Heart left ventricle (tissue), 16 donors: ENCODE measurements at regions of chr6 and their contacts with region 1.

Region 1: DNA sequence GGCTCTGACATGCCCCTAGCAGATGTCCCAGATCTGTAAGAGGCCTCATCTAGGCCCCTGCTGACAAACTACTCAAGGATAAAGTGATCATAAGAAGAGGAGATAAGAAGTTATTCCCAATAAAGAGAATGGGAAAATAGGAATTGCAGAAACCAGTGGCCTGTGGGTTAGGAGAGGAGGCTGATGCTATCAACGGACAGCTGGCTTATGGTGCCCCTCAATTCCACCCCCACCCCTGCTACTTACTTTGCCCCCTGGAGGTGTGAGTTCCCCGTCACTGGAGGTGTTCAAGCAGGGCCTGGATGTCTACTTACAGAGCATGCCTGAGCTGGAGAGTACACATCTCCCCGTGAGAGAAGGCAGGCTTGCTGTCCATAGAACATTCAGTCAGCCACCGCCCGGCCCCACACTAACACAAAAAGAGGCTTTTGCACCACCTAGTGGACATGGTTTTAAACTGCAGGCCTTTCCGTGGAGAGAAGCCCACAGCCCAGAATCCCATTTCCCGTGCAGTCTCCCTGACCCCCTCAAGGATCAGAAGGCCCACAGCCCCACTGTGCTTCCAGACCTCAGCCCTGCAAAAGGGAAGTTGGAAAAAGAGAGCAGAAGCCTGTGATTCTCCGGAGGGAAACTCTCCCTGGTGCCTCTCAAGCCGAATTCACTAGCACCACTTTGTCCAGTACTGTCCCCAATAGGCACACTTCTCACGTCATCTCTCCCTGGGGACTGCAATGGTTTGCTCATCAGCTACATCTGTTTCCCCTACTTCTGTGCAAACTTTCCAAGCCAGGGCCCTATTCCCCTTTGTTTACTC is 23.8 kb upstream of the BNIP5 start:
- DNase-seq: peak; percentile 74 to 87 (median 77)
- ATAC-seq: peak; percentile 83 to 92 (median 91)
- H3K4me3 ChIP-seq: no peak overlapping the region
- H3K27ac ChIP-seq: peak overlapping the region in 3 of 12 donors; percentile 15 to 39 (median 33)
- H3K4me1 ChIP-seq: peaks cover 0 to 44% (median 13%) of the 10 kb centered on the region in 12 donors
- H3K27me3 ChIP-seq: peaks cover 0 to 15% (median 0%) of the 10 kb centered on the region in 9 donors
- CTCF ChIP-seq: peak; percentile 74 to 86 (median 84)
- POLR2A ChIP-seq: no peak

Region 2: DNA sequence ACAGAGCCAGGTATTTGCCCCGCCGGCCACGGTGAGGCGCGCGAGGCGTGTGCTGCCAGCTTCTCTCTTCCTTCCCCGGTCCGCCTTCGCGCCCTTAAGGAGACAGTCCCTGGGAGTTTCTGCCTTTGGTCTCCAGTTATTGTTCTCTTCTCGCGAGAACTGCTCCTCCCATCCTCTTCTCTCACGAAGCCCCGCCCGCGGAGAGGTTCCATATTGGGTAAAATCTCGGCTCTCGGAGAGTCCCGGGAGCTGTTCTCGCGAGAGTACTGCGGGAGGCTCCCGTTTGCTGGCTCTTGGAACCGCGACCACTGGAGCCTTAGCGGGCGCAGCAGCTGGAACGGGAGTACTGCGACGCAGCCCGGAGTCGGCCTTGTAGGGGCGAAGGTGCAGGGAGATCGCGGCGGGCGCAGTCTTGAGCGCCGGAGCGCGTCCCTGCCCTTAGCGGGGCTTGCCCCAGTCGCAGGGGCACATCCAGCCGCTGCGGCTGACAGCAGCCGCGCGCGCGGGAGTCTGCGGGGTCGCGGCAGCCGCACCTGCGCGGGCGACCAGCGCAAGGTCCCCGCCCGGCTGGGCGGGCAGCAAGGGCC is 332.9 kb before region 1 on chr6 and contains the start of gene MAPK14:
- intact Hi-C with region 1: loop called in 2 of 10 experiments (anchors 10 kb)
- DNase-seq: peak; percentile 99 to 100 (median 99)
- ATAC-seq: peak; percentile 94 to 98 (median 97)
- H3K4me3 ChIP-seq: peak within 1 kb of the TSS; percentile 69 to 100 (median 92)
- H3K27ac ChIP-seq: peak within 1 kb of the TSS; percentile 83 to 96 (median 92)
- H3K4me1 ChIP-seq: peaks cover 0 to 46% (median 20%) of the 10 kb centered on the region in 12 donors
- H3K27me3 ChIP-seq: peaks cover 4 to 16% (median 7%) of the 10 kb centered on the region in 9 donors
- CTCF ChIP-seq: peak; percentile 85 to 97 (median 90)
- POLR2A ChIP-seq: peak; percentile 78 to 99
- total RNA-seq, gene MAPK14: 24.3 to 46.5 (median 34.9) TPM

Region 3: DNA sequence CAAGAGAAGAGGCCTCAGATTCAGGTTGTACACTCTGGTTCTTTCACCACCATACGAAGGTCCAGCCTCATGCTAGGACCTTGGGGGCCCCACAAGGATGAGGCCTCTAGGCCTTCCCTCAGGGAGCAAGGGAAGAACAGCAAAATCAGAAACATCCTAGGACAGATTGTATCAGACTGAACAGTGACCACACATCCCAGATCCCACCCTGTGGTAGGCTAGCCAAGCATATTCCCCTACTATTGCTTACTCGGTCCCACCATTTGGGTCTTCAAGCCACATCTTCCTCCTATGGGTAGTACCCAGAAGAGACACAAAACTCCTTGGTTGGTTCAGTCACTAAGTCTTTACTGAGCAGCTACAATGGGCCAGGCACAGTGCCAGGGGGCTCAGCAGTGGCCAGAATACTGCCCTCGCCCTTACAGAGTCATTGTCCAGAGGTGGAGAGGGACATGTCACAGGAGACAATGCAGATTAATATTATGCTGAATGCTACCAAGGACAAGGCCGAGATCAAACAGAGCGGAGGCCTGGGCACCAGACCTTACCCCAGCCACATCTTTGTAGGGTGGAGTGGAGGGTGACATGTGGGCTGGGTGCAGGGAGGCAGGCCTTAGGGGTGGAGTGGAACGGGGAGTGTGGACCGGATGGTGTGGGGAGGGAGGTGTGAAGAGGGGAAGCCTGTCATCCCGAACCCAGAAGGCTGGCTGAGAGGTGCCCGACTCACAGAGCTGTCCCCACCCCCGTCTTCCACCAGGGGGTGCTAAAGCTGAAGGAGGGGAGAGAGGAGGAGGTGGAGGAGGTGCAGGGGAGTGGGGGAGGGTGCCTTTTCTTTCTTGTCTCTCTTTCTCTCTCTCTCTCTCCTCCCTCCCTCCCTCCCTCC is 236.9 kb before region 1 on chr6:
- intact Hi-C with region 1: loop called in 9 of 10 experiments (anchors 2 to 10 kb)
- DNase-seq: peak; percentile 72 to 89 (median 80)
- ATAC-seq: peak; percentile 47 to 85 (median 80)
- H3K4me3 ChIP-seq: peak overlapping the region in 1 of 12 donors; percentile 1
- H3K27ac ChIP-seq: peak overlapping the region in 1 of 12 donors; percentile 63
- H3K4me1 ChIP-seq: peaks cover 0 to 75% (median 11%) of the 10 kb centered on the region in 12 donors
- H3K27me3 ChIP-seq: no peaks in the 10 kb centered on the region
- CTCF ChIP-seq: peak; percentile 37 to 67 (median 56)
- POLR2A ChIP-seq: no peak

Region 4: GRCh38 chr6:36129941-36130666 is 230.3 kb before region 1 on chr6 and contains the start of gene MAPK13:
- intact Hi-C with region 1: loop called in 6 of 10 experiments (anchors 2 to 10 kb)
- DNase-seq: no peak
- ATAC-seq: no peak
- H3K4me3 ChIP-seq: peak within 1 kb of the TSS in 11 of 12 donors; percentile 20 to 64 (median 45)
- H3K27ac ChIP-seq: peak within 1 kb of the TSS in 1 of 12 donors; percentile 84
- H3K4me1 ChIP-seq: peaks cover 0 to 57% (median 14%) of the 10 kb centered on the region in 12 donors
- H3K27me3 ChIP-seq: peaks cover 0 to 25% (median 5%) of the 10 kb centered on the region in 9 donors
- CTCF ChIP-seq: no peak
- POLR2A ChIP-seq: no peak
- total RNA-seq, gene MAPK13: 0.24 to 16.8 (median 0.56) TPM

Region 5: GRCh38 chr6:36302227-36302976 is 58.0 kb before region 1 on chr6:
- intact Hi-C with region 1: loop called (anchors 1 to 2 kb)
- DNase-seq: peak; percentile 75 to 89 (median 85)
- ATAC-seq: peak; percentile 61 to 92 (median 88)
- H3K4me3 ChIP-seq: no peak overlapping the region
- H3K27ac ChIP-seq: no peak overlapping the region
- H3K4me1 ChIP-seq: peaks cover 0 to 5% (median 0%) of the 10 kb centered on the region in 12 donors
- H3K27me3 ChIP-seq: peaks cover 0 to 21% (median 0%) of the 10 kb centered on the region in 9 donors
- CTCF ChIP-seq: peak; percentile 80 to 95 (median 90)
- POLR2A ChIP-seq: no peak

Region 6: DNA sequence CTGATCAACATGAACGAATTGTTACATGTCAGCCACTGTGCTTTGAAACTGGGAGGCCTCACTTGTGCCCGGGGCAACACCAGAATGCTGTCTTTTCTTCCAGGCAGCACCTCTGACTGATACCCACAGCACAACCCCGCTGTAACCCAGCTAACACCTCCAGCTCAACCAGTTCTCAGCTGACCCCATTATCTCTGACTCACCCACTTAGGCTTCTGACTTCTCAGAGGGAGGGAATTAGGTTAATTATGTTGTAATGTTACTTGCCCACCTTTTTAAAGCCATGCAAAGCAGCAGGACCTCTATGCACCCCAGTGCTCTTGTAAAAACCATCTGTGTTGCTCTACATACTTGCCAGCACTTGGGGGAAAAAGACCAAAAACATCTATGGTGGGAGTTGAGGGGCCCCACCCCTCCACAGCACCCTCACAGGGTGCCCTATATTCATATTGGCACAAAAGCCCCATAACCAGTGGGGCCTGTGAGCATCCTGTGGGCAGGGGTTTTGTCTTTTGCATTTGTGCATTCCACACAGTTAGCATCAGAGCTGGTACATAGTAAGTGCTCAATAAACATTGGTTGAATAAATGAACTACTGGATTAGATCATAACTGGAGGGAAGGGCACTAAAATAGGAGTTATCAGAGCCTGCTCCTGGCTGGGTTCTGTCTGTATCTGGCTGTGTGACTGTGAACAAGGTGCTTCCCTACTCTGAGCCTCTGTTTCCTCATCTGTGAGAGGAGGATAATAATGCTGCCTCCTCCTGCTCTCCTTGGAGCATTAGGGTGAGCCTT is 46.0 kb before region 1 on chr6:
- intact Hi-C with region 1: no loop called
- DNase-seq: no peak
- ATAC-seq: no peak
- H3K4me3 ChIP-seq: no peak overlapping the region
- H3K27ac ChIP-seq: no peak overlapping the region
- H3K4me1 ChIP-seq: peaks cover 0 to 8% (median 0%) of the 10 kb centered on the region in 12 donors
- H3K27me3 ChIP-seq: peaks cover 0 to 7% (median 0%) of the 10 kb centered on the region in 9 donors
- CTCF ChIP-seq: no peak
- POLR2A ChIP-seq: no peak

Region 7: GRCh38 chr6:36329798-36330291 is 30.6 kb before region 1 on chr6:
- intact Hi-C with region 1: no loop called
- DNase-seq: no peak
- ATAC-seq: no peak
- H3K4me3 ChIP-seq: no peak overlapping the region
- H3K27ac ChIP-seq: no peak overlapping the region
- H3K4me1 ChIP-seq: peaks cover 0 to 16% (median 9%) of the 10 kb centered on the region in 12 donors
- H3K27me3 ChIP-seq: peaks cover 0 to 49% (median 5%) of the 10 kb centered on the region in 9 donors
- CTCF ChIP-seq: no peak
- POLR2A ChIP-seq: no peak

Region 8: DNA sequence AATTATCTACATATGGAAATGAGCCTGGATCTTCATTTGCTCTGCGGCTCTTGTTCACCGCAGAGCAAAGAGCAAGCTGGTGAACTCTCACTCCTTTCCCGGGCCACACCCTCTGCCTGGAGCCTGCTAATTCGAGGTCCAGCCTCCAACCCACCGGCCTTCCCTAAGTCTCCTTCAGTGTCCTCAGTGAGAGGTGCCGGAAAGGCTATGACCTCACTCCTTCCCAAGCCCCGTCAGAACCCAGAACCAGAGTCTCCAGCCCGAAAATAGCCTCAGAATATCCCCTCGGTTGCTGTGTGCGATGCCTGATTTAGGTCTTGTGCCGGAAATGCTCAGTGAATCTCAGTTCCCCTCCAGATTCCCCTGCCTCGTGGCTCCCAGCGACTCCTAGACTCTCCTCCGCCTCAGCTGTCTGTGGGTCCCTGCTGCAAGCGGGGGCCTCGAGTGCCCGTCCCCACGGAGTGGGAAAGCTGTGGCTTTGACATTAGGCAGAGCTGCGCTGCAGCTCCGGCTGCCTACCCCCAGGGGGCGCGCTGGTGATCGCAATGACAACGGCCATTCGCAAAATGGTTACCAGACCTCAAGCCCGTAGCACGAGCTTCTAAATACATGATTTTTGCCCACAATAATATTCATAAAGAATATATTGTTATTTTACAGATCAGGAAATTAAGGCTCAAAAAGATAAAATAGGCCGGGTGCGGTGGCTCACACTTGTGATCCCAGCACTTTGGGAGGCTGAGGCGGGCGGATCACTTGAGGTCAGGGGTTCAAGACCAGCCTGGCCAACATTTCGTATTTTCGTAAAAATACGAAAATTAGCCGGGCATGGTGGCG is 19.6 kb before region 1 on chr6:
- intact Hi-C with region 1: loop called in 6 of 10 experiments (anchors 1 to 2 kb)
- DNase-seq: peak; percentile 64 to 92 (median 77)
- ATAC-seq: peak; percentile 44 to 83 (median 80)
- H3K4me3 ChIP-seq: peak overlapping the region in 7 of 12 donors; percentile 3 to 41 (median 24)
- H3K27ac ChIP-seq: peak overlapping the region in 1 of 12 donors; percentile 10
- H3K4me1 ChIP-seq: peaks cover 0 to 12% (median 5%) of the 10 kb centered on the region in 12 donors
- H3K27me3 ChIP-seq: peaks cover 0 to 20% (median 7%) of the 10 kb centered on the region in 9 donors
- CTCF ChIP-seq: peak; percentile 90 to 98 (median 97)
- POLR2A ChIP-seq: no peak

Region 9: GRCh38 chr6:36478051-36478526 is 117.6 kb after region 1 on chr6:
- intact Hi-C with region 1: no loop called
- DNase-seq: no peak
- ATAC-seq: peak in 1 of 4 donors; percentile 9
- H3K4me3 ChIP-seq: no peak overlapping the region
- H3K27ac ChIP-seq: no peak overlapping the region
- H3K4me1 ChIP-seq: peaks cover 0 to 9% (median 0%) of the 10 kb centered on the region in 12 donors
- H3K27me3 ChIP-seq: no peaks in the 10 kb centered on the region
- CTCF ChIP-seq: no peak
- POLR2A ChIP-seq: no peak